Kidney (tissue), 22 donors: ENCODE measurements at regions of chr15 and their contacts with region 1.

Region 1: DNA sequence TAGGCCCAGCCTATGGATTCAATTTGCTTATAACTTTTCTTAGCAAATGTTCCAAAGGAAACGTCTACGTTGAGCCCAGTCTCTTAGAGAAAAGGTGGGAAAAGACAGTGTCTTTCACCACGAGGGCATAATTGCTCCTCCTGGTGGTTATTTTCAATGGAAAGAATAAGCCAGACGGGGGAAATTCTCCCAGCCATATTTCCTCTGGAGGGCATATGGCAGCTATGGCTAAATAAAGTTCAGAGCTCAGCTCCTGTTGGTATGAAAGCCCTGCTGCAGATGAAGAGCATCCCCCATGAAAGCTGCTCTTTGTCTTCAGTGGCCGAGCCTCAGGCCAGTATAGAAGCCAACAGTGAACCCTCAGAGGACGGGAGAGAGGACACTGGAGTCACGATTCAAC is 297.9 kb downstream of the RYR3 start:
- DNase-seq: peak in 2 of 5 donors; percentile 8 to 29
- H3K4me3 ChIP-seq: no peak overlapping the region
- H3K27ac ChIP-seq: no peak overlapping the region
- H3K4me1 ChIP-seq: no peaks in the 10 kb centered on the region
- H3K27me3 ChIP-seq: no peaks in the 10 kb centered on the region
- CTCF ChIP-seq: peak; percentile 27

Region 2: GRCh38 chr15:33660151-33660550 is 51.4 kb after region 1 on chr15:
- intact Hi-C with region 1: loop called (anchors 10 kb)
- DNase-seq: no peak
- H3K4me3 ChIP-seq: no peak overlapping the region
- H3K27ac ChIP-seq: no peak overlapping the region
- H3K4me1 ChIP-seq: no peaks in the 10 kb centered on the region
- H3K27me3 ChIP-seq: no peaks in the 10 kb centered on the region
- CTCF ChIP-seq: no peak